ENCODE measurements at regions of chr22 and their contacts with region 1.

Region 1: GRCh38 chr22:31080848-31081649 is at the start of gene SMTN:
- DNase-seq: peak; percentile 79 to 99
- H3K4me3 ChIP-seq: peak within 1 kb of the TSS; percentile 69 to 80 (median 74)
- H3K27ac ChIP-seq: peak within 1 kb of the TSS; percentile 84; the same call in 1 of the 2 replicates
- H3K4me1 ChIP-seq: peaks cover 0 to 27% (median 16%) of the 10 kb centered on the region in 4 experiments; a peak in 6 of 7 replicates
- H3K27me3 ChIP-seq: peaks cover 0 to 5% (median 2%) of the 10 kb centered on the region in 4 experiments; a peak in 3 of 7 replicates
- CTCF ChIP-seq: no peak
- EP300 ChIP-seq: no peak
- POLR2A ChIP-seq: peak; percentile 76 to 88
- RAD21 ChIP-seq: no peak
- total RNA-seq, gene SMTN: 20.8 and 26.5 TPM in 2 replicates

Region 2: GRCh38 chr22:30968924-30969539 is 112.0 kb before region 1 on chr22 and contains the start of gene TUG1:
- CTCF ChIA-PET with region 1: interaction called, 38 read pairs
- POLR2A ChIA-PET with region 1: interaction called, 220 read pairs
- DNase-seq: peak; percentile 93
- H3K4me3 ChIP-seq: peak within 1 kb of the TSS; percentile 67 to 84 (median 74)
- H3K27ac ChIP-seq: peak within 1 kb of the TSS; percentile 93
- H3K4me1 ChIP-seq: peaks cover 0 to 7% (median 4%) of the 10 kb centered on the region in 4 experiments; a peak in 4 of 7 replicates
- H3K27me3 ChIP-seq: no peaks in the 10 kb centered on the region
- CTCF ChIP-seq: no peak
- EP300 ChIP-seq: no peak; a peak in 1 of 3 replicates
- POLR2A ChIP-seq: peak; percentile 85 to 97
- RAD21 ChIP-seq: peak in 1 of 2 experiments; percentile 0; a peak in 2 of 4 replicates
- total RNA-seq, gene TUG1: 106 and 119 TPM in 2 replicates

Region 3: GRCh38 chr22:31068970-31069369 is 12.1 kb before region 1 on chr22:
- CTCF ChIA-PET with region 1: interaction called, 9 read pairs
- POLR2A ChIA-PET with region 1: interaction called, 14 read pairs
- DNase-seq: no peak
- H3K4me3 ChIP-seq: no peak overlapping the region
- H3K27ac ChIP-seq: no peak overlapping the region
- H3K4me1 ChIP-seq: no peaks in the 10 kb centered on the region
- H3K27me3 ChIP-seq: no peaks in the 10 kb centered on the region
- CTCF ChIP-seq: no peak
- EP300 ChIP-seq: no peak
- POLR2A ChIP-seq: no peak
- RAD21 ChIP-seq: no peak

Region 4: GRCh38 chr22:31107178-31107893 is 26.3 kb after region 1 on chr22 and contains the start of gene SELENOM:
- CTCF ChIA-PET with region 1: interaction called, 207 read pairs
- POLR2A ChIA-PET with region 1: interaction called, 25 read pairs
- DNase-seq: peak; percentile 89 to 95
- H3K4me3 ChIP-seq: peak within 1 kb of the TSS; percentile 49 to 77 (median 68)
- H3K27ac ChIP-seq: no peak within 1 kb of the TSS
- H3K4me1 ChIP-seq: peaks cover 0 to 15% (median 11%) of the 10 kb centered on the region in 4 experiments; a peak in 5 of 7 replicates
- H3K27me3 ChIP-seq: peaks cover 10 to 23% (median 22%) of the 10 kb centered on the region in 4 experiments
- CTCF ChIP-seq: peak; percentile 75 to 83 (median 76)
- EP300 ChIP-seq: no peak
- POLR2A ChIP-seq: peak in 1 of 2 experiments; percentile 58; a peak in 2 of 3 replicates
- RAD21 ChIP-seq: peak; percentile 78
- total RNA-seq, gene SELENOM: 21.8 and 22.7 TPM in 2 replicates

Region 5: GRCh38 chr22:31241936-31242335 is 160.9 kb after region 1 on chr22:
- CTCF ChIA-PET with region 1: no interaction called
- POLR2A ChIA-PET with region 1: no interaction called
- DNase-seq: no peak
- H3K4me3 ChIP-seq: no peak overlapping the region
- H3K27ac ChIP-seq: no peak overlapping the region
- H3K4me1 ChIP-seq: peaks cover 4 to 21% (median 6%) of the 10 kb centered on the region in 4 experiments; a peak in 4 of 7 replicates
- H3K27me3 ChIP-seq: no peaks in the 10 kb centered on the region
- CTCF ChIP-seq: peak in 1 of 3 experiments; percentile 7; a peak in 1 of 4 replicates
- EP300 ChIP-seq: no peak
- POLR2A ChIP-seq: no peak
- RAD21 ChIP-seq: no peak